ENCODE measurements at regions of chr17 and their contacts with region 1.

Region 1: DNA sequence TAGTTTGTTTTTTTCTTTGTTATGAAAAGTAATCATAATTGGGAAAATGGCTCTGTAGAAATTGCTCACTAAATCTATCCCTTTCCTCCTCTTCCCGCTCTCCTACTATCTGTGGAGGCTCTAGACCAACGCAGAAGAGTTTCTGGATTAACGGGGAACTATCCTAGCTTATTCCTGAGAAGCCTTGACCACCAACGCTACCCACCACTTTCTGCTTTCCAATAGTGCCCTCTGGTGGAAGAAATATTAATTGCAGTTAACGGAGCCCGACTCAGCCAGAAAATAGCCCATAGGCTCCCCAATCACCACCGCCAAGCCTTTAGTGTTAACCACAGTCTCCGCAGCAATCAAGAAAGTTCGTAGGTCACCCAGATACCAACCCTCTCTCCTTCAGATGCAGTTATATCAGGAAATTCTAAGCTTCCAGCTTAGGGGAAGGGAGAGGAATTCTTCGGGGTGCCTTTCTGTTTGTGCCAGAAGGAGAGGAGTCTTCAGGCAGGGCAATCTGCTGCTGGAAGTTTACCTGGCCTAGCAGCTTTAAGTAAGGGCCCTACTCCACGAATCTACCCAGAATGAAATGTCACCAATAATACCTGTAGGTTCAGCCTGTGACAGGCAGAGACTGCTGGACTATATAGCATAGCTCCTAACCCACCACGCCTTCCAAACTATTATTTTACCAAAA is 23.0 kb upstream of the NSRP1 start:
- DNase-seq: peak; percentile 41 to 66 (median 53)
- H3K4me3 ChIP-seq: no peak overlapping the region
- H3K4me3 Mint-ChIP-seq: no peak overlapping the region
- H3K27ac ChIP-seq: no peak overlapping the region
- H3K27ac Mint-ChIP-seq: no peak overlapping the region
- H3K4me1 ChIP-seq: peaks cover 0 to 3% of the 10 kb centered on the region in 2 donors
- H3K4me1 Mint-ChIP-seq: peaks cover 11% of the 10 kb centered on the region
- H3K27me3 ChIP-seq: no peaks in the 10 kb centered on the region
- H3K27me3 Mint-ChIP-seq: peaks cover 0 to 6% (median 0%) of the 10 kb centered on the region in 3 donors
- CTCF ChIP-seq: peak; percentile 90

Region 2: DNA sequence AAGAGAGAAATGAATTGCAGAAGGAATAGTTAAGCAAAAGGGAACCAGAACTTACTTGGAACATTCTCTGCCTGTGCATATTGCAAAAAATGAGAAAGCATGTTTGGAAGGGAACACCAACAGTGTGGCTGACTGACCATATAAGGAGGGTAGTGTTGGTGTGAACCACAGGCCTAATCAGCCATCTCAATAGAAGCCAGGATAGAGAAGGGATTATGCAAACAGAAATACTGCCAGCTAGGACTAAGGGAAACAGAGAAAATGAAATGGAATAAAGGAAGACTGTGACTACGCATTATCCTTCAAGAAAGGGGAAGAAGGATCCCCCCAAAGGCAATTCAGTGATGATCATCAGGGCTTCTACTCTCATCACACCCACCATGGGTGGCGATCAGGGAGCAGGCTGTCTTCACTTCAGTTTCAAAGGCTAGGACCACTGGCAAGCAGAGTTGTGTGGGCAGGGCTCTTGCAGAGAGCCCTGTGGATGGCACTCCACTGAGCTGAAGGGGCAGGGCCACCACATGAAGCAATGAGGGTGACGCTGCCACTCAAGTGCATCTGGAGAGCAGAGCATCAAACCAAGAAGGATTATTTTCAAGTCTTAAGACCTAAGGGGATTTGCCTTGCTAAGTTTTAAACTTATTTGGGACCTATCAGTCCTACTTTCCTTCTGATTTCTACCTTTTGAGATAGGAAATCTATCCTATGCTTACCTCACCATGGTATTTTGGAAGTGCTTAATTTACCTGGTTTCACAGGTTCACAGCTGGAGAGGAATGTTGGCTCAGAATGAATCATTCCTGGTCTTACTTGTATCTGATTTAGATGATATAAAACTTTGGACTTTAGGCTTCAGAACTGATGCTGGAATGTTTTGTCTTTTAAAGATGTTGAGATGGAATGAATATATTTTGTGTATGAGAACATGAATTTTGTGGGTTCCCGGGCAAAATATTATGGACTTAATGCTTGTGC is 304.1 kb before region 1 on chr17:
- intact Hi-C with region 1: loop called in 1 of 2 experiments (anchors 10 kb)
- DNase-seq: peak in 2 of 3 donors; percentile 7 to 10
- H3K4me3 ChIP-seq: no peak overlapping the region
- H3K4me3 Mint-ChIP-seq: peak overlapping the region in 1 of 2 donors; percentile 18
- H3K27ac ChIP-seq: peak overlapping the region; percentile 57 to 66
- H3K27ac Mint-ChIP-seq: peak overlapping the region; percentile 30 to 87 (median 84)
- H3K4me1 ChIP-seq: peaks cover 21 to 27% of the 10 kb centered on the region in 2 donors
- H3K4me1 Mint-ChIP-seq: peaks cover 30% of the 10 kb centered on the region
- H3K27me3 ChIP-seq: no peaks in the 10 kb centered on the region
- H3K27me3 Mint-ChIP-seq: no peaks in the 10 kb centered on the region
- CTCF ChIP-seq: no peak

Region 3: DNA sequence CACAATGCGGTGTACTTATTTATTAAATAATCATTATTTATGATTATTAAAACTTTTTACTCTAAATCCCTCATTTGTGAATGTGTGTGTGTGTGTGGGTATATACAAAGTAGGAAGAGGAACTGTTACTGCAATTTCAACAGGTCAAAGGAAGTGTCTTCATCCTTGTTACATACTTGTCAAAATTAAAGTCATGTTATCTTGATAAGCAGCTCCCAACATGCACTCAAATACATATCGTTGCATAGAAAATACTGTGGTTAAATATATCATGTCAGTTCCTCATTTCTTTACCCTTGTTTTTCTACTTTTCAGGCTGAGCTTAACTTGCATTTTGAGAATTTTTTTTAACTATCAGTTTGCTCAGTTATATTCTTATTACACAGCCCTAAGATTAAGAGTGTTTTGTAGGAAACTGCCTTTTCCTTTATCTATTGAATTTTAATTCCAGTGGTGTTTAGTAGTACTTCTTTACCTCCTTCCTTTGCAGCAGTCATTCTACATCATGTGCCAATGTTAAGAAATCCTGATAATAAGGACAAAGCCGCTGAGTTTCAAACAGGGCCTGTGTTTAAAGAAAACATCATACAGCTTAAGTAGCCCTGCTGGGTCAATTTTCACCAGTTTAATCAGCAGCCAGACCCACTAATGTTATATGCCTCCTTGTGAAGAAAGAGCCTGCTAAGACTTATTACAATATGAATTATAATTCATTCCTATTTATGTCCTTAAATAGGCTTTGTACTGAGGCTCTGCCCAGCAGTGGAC is 145.0 kb before region 1 on chr17:
- intact Hi-C with region 1: no loop called
- DNase-seq: peak; percentile 39 to 53 (median 40)
- H3K4me3 ChIP-seq: peak overlapping the region in 1 of 3 experiments; percentile 1
- H3K4me3 Mint-ChIP-seq: peak overlapping the region in 1 of 2 donors; percentile 35
- H3K27ac ChIP-seq: peak overlapping the region in 1 of 2 donors; percentile 73
- H3K27ac Mint-ChIP-seq: peak overlapping the region; percentile 63 to 86 (median 75)
- H3K4me1 ChIP-seq: peaks cover 23 to 29% of the 10 kb centered on the region in 2 donors
- H3K4me1 Mint-ChIP-seq: peaks cover 32% of the 10 kb centered on the region
- H3K27me3 ChIP-seq: no peaks in the 10 kb centered on the region
- H3K27me3 Mint-ChIP-seq: no peaks in the 10 kb centered on the region
- CTCF ChIP-seq: no peak

Region 4: DNA sequence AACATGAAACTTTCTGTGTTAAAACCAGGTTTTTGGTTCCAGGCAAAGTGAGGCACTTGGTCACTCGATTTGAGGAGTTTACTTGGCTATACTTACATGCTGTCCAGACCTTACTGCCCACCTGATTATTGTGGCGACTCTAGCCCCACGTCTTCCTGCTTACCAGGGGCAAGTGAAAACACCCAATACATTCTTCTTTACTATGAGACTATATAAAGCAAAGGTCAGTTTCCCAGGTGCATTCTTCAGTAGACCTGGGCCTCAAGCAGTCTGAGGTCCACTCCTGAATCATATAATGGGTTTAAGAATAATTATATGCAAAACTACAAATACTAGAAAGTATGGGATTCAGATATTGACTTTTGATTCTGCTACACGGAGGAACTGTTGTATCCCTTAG is 65.9 kb before region 1 on chr17:
- intact Hi-C with region 1: loop called (anchors 2 kb)
- DNase-seq: no peak
- H3K4me3 ChIP-seq: no peak overlapping the region
- H3K4me3 Mint-ChIP-seq: no peak overlapping the region
- H3K27ac ChIP-seq: no peak overlapping the region
- H3K27ac Mint-ChIP-seq: no peak overlapping the region
- H3K4me1 ChIP-seq: no peaks in the 10 kb centered on the region
- H3K4me1 Mint-ChIP-seq: no peaks in the 10 kb centered on the region
- H3K27me3 ChIP-seq: no peaks in the 10 kb centered on the region
- H3K27me3 Mint-ChIP-seq: peaks cover 0 to 2% (median 0%) of the 10 kb centered on the region in 3 donors
- CTCF ChIP-seq: no peak

Region 5: DNA sequence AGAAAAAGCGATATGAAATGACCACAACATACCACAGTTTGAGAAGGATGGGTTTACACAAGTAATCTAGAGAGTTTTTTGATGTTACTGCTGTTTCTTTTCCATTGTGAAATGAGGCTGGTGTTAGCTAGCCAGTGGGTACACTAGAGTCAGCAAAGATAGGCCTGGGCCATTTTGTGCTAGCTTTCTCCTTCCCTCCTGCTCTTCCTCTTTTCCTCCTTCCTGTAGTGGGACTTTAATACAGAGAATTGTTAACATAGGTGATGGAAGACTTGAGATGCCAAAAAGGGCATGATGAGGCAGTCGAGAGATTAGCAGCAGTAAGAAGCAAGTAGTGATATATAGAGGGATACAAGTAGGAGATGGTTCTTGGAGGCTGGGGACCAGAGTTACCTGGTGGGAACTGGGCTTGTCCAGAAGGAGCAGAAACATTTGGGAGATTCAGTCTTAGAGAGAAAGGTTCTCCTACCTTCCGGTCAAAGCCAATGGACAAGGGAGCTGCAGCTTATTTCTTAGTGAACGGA is 30.7 kb after region 1 on chr17:
- intact Hi-C with region 1: no loop called
- DNase-seq: no peak
- H3K4me3 ChIP-seq: no peak overlapping the region
- H3K4me3 Mint-ChIP-seq: no peak overlapping the region
- H3K27ac ChIP-seq: peak overlapping the region in 1 of 2 donors; percentile 44
- H3K27ac Mint-ChIP-seq: peak overlapping the region; percentile 6 to 92 (median 74)
- H3K4me1 ChIP-seq: peaks cover 4% of the 10 kb centered on the region in 2 donors
- H3K4me1 Mint-ChIP-seq: peaks cover 13% of the 10 kb centered on the region
- H3K27me3 ChIP-seq: no peaks in the 10 kb centered on the region
- H3K27me3 Mint-ChIP-seq: no peaks in the 10 kb centered on the region
- CTCF ChIP-seq: no peak

Region 6: DNA sequence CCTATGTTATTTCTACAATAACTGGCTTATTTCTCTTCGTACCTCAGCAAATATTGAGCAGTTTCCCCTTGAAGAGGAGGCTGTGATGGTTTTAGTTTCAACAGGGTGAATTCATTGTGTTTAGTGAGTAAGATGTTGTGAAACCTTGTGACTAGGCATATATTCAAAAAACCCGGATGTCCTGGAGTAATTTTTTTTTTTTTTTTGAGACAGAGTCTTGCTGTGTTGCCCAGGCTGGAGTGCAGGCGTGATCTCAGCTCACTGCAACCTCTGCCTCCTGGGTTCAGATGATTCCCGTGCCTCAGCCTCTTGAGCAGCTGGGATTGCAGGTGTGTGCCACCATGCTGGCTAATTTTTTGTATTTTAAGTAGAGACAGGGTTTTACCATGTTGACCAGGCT is 296.2 kb after region 1 on chr17:
- intact Hi-C with region 1: no loop called
- DNase-seq: peak; percentile 65 to 81 (median 79)
- H3K4me3 ChIP-seq: peak overlapping the region in 1 of 3 experiments; percentile 54
- H3K4me3 Mint-ChIP-seq: peak overlapping the region in 1 of 2 donors; percentile 53
- H3K27ac ChIP-seq: peak overlapping the region; percentile 56 to 85
- H3K27ac Mint-ChIP-seq: peak overlapping the region; percentile 89 to 96 (median 91)
- H3K4me1 ChIP-seq: peaks cover 17 to 26% of the 10 kb centered on the region in 2 donors
- H3K4me1 Mint-ChIP-seq: peaks cover 19% of the 10 kb centered on the region
- H3K27me3 ChIP-seq: no peaks in the 10 kb centered on the region
- H3K27me3 Mint-ChIP-seq: peaks cover 0 to 1% (median 0%) of the 10 kb centered on the region in 3 donors
- CTCF ChIP-seq: no peak